Activated CD8-positive, alpha-beta memory T cell treated with anti-CD3 and anti-CD28 coated beads, Interleukin-2, amount 10 ng/mL, durations not matched to agents 7 days and 5 days (primary cell): ENCODE measurements at regions of chrX and their contacts with region 1.

Region 1: GRCh38 chrX:103343105-103343504 is 13.1 kb downstream of the TCEAL7 start:
- DNase-seq: peak; percentile 41
- ATAC-seq: no peak
- H3K4me3 Mint-ChIP-seq: no peak overlapping the region
- H3K27ac Mint-ChIP-seq: no peak overlapping the region
- H3K4me1 Mint-ChIP-seq: peaks cover 2% of the 10 kb centered on the region
- H3K27me3 Mint-ChIP-seq: peaks cover 4% of the 10 kb centered on the region

Region 2: GRCh38 chrX:103214870-103215424 is 128.2 kb before region 1 on chrX and contains the start of gene BEX4:
- CTCF ChIA-PET with region 1: no interaction called
- DNase-seq: peak; percentile 87
- ATAC-seq: peak; percentile 94
- H3K4me3 Mint-ChIP-seq: peak within 1 kb of the TSS; percentile 66
- H3K27ac Mint-ChIP-seq: peak within 1 kb of the TSS; percentile 78
- H3K4me1 Mint-ChIP-seq: peaks cover 2% of the 10 kb centered on the region
- H3K27me3 Mint-ChIP-seq: peaks cover 6% of the 10 kb centered on the region
- total RNA-seq, gene BEX4: 8.3 to 12.4 TPM

Region 3: GRCh38 chrX:103464774-103465117 is 121.6 kb after region 1 on chrX:
- CTCF ChIA-PET with region 1: interaction called, 17 read pairs
- DNase-seq: peak; percentile 79
- ATAC-seq: peak; percentile 90
- H3K4me3 Mint-ChIP-seq: peak overlapping the region; percentile 72
- H3K27ac Mint-ChIP-seq: peak overlapping the region; percentile 65
- H3K4me1 Mint-ChIP-seq: peaks cover 2% of the 10 kb centered on the region
- H3K27me3 Mint-ChIP-seq: no peaks in the 10 kb centered on the region